ENCODE measurements at regions of chr5 and their contacts with region 1.

Region 1: DNA sequence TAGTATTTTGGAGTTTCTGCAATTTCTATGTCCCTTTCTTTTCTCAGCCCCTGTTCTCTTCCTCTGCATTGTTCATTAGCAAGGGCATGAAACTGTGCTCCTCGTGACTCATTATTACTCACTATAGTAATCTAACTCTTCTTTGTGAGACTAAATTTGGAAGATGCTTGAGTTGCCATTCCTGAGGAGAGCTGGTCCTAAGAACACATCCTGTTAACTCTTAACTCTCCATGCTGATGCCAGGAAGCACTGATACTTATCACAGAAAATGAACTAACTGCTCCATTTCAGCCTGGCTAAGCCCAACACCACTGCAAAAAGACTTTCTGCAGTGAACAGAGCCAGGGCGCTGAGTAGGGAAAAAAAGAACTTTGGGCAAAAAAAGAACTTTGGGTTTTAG is 10.6 kb upstream of the CSNK1A1 start:
- DNase-seq: peak; percentile 91
- H3K4me3 ChIP-seq: peak overlapping the region in 1 of 3 experiments; percentile 54
- H3K27ac ChIP-seq: peak overlapping the region; percentile 71
- H3K4me1 ChIP-seq: peaks cover 39% of the 10 kb centered on the region
- H3K27me3 ChIP-seq: no peaks in the 10 kb centered on the region
- CTCF ChIP-seq: no peak
- POLR2A ChIP-seq: peak; percentile 37

Region 2: DNA sequence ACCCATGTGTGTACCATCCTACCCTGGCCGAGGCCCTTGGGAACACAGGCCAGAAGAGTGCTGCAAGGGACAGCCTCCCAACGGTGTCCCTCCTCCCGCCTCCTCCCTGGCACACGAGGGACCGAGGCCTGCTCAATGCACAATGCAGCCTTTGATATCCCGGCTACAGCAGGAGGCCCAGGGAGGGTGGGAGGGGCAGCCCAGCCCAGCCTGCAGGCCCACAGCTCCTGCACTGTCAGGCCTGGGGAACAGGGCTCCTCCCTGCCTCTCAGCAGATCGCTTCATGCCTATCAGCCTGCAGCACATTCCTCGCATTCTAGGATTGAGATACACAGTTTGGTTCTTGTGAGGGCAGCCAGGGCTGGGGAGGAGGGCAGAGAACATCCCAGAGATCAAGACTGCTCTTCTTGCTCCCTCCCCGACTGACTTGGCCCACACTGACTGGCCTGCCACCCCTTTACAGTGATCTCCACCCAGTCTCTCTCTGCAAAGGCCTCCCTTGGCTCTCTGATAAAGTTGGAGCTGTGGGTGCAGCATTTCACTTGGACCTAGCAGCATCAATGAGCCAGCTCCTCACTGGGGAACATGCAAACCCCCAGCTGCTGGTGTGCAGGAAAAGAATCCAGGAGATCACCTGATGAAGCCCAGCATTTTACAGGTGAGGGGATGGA is 498.7 kb before region 1 on chr5 and contains the start of gene SH3TC2:
- CTCF ChIA-PET with region 1: no interaction called
- POLR2A ChIA-PET with region 1: no interaction called
- dilution Hi-C with region 1: no loop called
- intact Hi-C with region 1: loop called (anchors 10 kb)
- DNase-seq: peak; percentile 28
- H3K4me3 ChIP-seq: no peak within 1 kb of the TSS
- H3K27ac ChIP-seq: peak within 1 kb of the TSS; percentile 97
- H3K4me1 ChIP-seq: peaks cover 39% of the 10 kb centered on the region
- H3K27me3 ChIP-seq: no peaks in the 10 kb centered on the region
- CTCF ChIP-seq: no peak
- POLR2A ChIP-seq: peak; percentile 18
- total RNA-seq, gene SH3TC2: 3.3 and 4.3 TPM in 2 replicates

Region 3: GRCh38 chr5:149317281-149318048 is 244.4 kb before region 1 on chr5:
- CTCF ChIA-PET with region 1: interaction called, 8 read pairs
- POLR2A ChIA-PET with region 1: no interaction called
- dilution Hi-C with region 1: no loop called
- intact Hi-C with region 1: loop called (anchors 1 kb)
- DNase-seq: peak; percentile 62
- H3K4me3 ChIP-seq: no peak overlapping the region
- H3K27ac ChIP-seq: no peak overlapping the region
- H3K4me1 ChIP-seq: peaks cover 22% of the 10 kb centered on the region
- H3K27me3 ChIP-seq: no peaks in the 10 kb centered on the region
- CTCF ChIP-seq: peak; percentile 51 to 64
- POLR2A ChIP-seq: no peak

Region 4: DNA sequence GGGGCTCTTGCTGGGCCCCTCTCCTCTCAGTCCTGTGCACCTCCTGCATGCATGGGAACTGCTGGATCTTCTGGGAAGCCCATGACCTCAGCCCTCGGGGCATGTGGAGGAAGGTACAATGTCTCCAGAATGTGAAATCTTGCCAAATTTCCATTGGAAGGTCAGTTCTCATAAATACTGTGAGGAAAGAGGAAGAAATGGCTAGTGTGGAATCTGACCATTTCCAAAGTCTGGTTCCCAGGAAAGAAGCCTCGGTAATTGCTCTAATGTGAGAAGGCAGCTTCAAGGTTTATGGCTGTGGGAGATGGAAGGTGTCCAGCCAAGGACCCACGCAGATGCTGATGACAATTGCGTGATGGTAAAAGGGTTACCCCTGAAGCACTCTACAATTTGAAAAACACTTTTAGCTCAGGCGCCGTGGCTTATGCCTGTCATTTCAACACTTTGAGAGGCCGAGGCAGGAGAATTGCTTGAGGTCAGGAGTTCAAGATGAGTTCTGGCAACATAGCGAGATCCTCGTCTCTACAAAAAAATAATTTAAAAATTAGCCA is 174.7 kb before region 1 on chr5:
- CTCF ChIA-PET with region 1: interaction called, 40 read pairs
- POLR2A ChIA-PET with region 1: no interaction called
- dilution Hi-C with region 1: no loop called
- intact Hi-C with region 1: loop called (anchors 1 kb)
- DNase-seq: no peak
- H3K4me3 ChIP-seq: no peak overlapping the region
- H3K27ac ChIP-seq: no peak overlapping the region
- H3K4me1 ChIP-seq: no peaks in the 10 kb centered on the region
- H3K27me3 ChIP-seq: no peaks in the 10 kb centered on the region
- CTCF ChIP-seq: no peak
- POLR2A ChIP-seq: no peak

Region 5: DNA sequence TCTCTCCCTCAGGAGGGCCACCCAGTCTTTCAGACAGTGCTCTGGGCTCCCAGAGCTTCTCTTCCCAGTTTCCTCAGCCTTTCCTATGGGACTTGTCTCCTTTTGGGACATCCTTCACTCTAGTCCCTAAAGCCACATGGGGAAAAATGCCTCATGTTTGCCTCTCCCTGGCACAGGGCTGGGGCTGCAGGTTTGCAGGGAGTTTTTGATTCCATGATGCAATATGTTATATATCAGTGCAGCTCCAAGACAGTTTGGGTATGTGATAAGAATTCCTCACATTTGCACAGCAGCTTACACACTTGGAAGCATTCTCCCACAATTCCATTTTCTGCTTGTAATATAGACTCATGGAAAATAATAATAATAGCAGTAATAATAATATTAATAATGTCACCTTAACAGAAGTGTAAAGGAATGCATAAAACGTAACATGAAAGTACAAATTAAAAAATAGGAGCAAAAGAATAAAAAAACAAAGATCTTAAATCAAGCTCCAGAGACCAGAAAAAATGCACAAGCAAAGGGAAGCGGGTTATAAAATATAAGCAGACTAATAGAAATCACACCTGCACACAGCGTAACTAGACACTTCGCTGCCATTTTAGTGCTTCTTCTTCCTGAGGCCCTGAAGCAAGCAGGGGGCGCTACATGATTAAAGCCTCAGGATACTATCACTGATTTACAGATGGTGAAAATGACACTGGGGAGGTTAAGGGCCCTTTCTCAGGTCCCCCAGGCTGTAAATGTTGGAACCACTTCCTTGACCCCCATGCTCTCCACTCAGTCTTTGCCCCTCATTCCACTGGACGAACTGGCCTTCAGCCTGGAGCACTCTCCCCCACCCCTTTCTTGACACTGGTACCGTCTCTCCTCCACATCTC is 112.8 kb before region 1 on chr5:
- CTCF ChIA-PET with region 1: interaction called, 13 read pairs
- POLR2A ChIA-PET with region 1: no interaction called
- dilution Hi-C with region 1: no loop called
- intact Hi-C with region 1: loop called (anchors 1 kb)
- DNase-seq: peak; percentile 56
- H3K4me3 ChIP-seq: no peak overlapping the region
- H3K27ac ChIP-seq: peak overlapping the region; percentile 90
- H3K4me1 ChIP-seq: peaks cover 63% of the 10 kb centered on the region
- H3K27me3 ChIP-seq: no peaks in the 10 kb centered on the region
- CTCF ChIP-seq: peak; percentile 22 to 23
- POLR2A ChIP-seq: no peak

Region 6: DNA sequence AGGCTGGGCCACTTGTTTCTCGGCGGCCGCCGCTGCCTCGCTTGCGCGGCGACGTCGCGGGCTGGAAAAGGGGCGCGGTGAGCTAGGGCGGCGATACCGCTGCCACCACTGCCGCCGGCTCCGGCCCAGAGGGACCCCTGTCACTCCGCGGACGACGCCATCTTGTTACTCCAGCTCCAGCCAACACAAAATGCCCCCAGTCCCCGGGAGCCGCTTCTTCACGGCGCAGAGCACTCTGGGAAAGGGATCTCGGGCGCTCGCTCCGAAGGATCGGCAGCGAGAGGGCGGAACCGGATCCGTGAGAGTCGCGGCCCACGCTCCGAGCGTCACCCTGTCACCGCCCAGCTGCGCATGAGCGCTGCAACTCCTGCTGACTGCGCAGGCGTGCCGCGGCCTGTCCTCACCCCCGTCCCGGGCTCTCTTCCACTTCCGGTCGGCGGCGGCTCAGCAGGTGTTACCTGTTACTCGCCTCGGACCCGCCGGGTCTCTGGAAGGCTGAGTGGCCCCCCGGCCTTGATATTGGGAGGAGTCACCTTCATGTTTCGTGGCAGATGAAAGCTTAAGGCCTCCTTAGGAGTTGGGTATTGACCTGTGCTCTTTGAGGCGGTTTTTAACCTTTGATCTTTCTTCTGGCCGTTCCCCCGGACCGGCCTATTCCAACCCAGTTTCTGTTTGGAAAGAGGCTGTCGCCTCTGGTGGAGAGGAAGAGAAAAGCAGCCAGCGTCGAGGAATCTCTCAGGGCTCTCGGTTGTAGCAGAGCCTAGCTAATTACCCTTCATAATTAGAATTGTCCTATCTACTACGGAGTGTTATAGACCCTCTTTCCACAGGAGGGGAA is 10.4 kb before region 1 on chr5 and contains the start of gene CSNK1A1:
- CTCF ChIA-PET with region 1: interaction called, 40 read pairs
- POLR2A ChIA-PET with region 1: interaction called, 34 read pairs
- dilution Hi-C with region 1: no loop called
- intact Hi-C with region 1: loop called (anchors 1 kb)
- DNase-seq: peak; percentile 99
- H3K4me3 ChIP-seq: peak within 1 kb of the TSS; percentile 81 to 97 (median 85)
- H3K27ac ChIP-seq: peak within 1 kb of the TSS; percentile 91
- H3K4me1 ChIP-seq: peaks cover 31% of the 10 kb centered on the region
- H3K27me3 ChIP-seq: no peaks in the 10 kb centered on the region
- CTCF ChIP-seq: peak; percentile 66 to 71
- POLR2A ChIP-seq: peak; percentile 94
- total RNA-seq, gene CSNK1A1: 253 and 259 TPM in 2 replicates

Region 7: GRCh38 chr5:149618581-149619251 is 56.9 kb after region 1 on chr5:
- CTCF ChIA-PET with region 1: interaction called, 71 read pairs
- POLR2A ChIA-PET with region 1: no interaction called
- dilution Hi-C with region 1: no loop called
- intact Hi-C with region 1: loop called (anchors 1 kb)
- DNase-seq: peak; percentile 70
- H3K4me3 ChIP-seq: no peak overlapping the region
- H3K27ac ChIP-seq: no peak overlapping the region
- H3K4me1 ChIP-seq: peaks cover 6% of the 10 kb centered on the region
- H3K27me3 ChIP-seq: no peaks in the 10 kb centered on the region
- CTCF ChIP-seq: peak; percentile 67 to 75
- POLR2A ChIP-seq: no peak

Region 8: GRCh38 chr5:149820536-149821510 is 259.0 kb after region 1 on chr5:
- CTCF ChIA-PET with region 1: no interaction called
- POLR2A ChIA-PET with region 1: no interaction called
- dilution Hi-C with region 1: no loop called
- intact Hi-C with region 1: no loop called
- DNase-seq: no peak
- H3K4me3 ChIP-seq: no peak overlapping the region
- H3K27ac ChIP-seq: no peak overlapping the region
- H3K4me1 ChIP-seq: no peaks in the 10 kb centered on the region
- H3K27me3 ChIP-seq: no peaks in the 10 kb centered on the region
- CTCF ChIP-seq: no peak
- POLR2A ChIP-seq: no peak